ENCODE measurements at regions of chr9 and their contacts with region 1.

Region 1: GRCh38 chr9:121399883-121400607 is 30.0 kb upstream of the STOM start:
- DNase-seq: no peak
- ATAC-seq: peak; percentile 65 to 84 (median 80)
- H3K4me3 ChIP-seq: no peak overlapping the region
- H3K27ac ChIP-seq: no peak overlapping the region
- H3K4me1 ChIP-seq: no peaks in the 10 kb centered on the region
- H3K27me3 ChIP-seq: no peaks in the 10 kb centered on the region
- CTCF ChIP-seq: peak; percentile 67 to 88 (median 70)
- POLR2A ChIP-seq: no peak

Region 2: DNA sequence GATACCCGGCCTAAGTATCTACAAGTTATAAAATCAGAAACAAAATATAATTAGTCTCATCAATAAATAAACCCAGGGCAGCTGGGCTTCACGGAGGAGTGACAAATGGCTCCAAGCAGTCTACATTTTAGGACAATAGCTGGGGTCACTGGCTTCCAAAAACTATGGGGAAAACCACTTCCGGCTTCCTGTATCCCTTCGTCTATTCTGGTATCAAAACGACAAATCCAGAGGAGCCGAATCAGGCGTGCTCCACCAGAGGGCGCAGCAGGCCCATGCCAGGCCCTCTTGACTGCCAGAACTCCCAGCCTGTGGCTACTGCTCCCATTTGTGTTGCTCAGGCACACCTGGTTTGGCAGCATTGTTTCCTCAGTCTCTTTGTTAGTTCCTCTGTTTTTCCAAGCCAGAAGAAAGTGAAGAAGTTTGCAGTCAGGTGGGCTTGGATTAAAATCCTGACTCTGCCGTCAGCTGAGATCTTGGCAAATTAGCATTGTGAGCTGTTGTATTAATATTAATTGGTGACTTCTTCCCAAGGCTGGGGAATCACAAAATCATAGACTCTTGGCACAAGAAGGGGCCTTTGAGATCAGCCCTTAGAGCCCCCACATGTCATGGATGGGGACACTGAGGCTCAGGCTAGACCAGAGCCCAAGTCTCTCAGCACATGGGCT is 186.8 kb before region 1 on chr9:
- intact Hi-C with region 1: loop called in 1 of 2 experiments (anchors 10 kb)
- DNase-seq: peak; percentile 85 to 88 (median 86)
- ATAC-seq: peak; percentile 99 to 100 (median 100)
- H3K4me3 ChIP-seq: no peak overlapping the region
- H3K27ac ChIP-seq: no peak overlapping the region
- H3K4me1 ChIP-seq: no peaks in the 10 kb centered on the region
- H3K27me3 ChIP-seq: no peaks in the 10 kb centered on the region
- CTCF ChIP-seq: peak; percentile 93 to 98 (median 94)
- POLR2A ChIP-seq: no peak

Region 3: GRCh38 chr9:121434969-121435368 is 34.9 kb after region 1 on chr9:
- intact Hi-C with region 1: no loop called
- DNase-seq: no peak
- ATAC-seq: no peak
- H3K4me3 ChIP-seq: no peak overlapping the region
- H3K27ac ChIP-seq: no peak overlapping the region
- H3K4me1 ChIP-seq: no peaks in the 10 kb centered on the region
- H3K27me3 ChIP-seq: no peaks in the 10 kb centered on the region
- CTCF ChIP-seq: no peak
- POLR2A ChIP-seq: no peak

Measured in right lobe of liver (tissue), 6 donors.